Calu3 (cell line): ENCODE measurements at regions of chr15 and their contacts with region 1.

Region 1: GRCh38 chr15:100671858-100672543 is 69.6 kb downstream of the ASB7 start:
- DNase-seq: peak; percentile 78
- H3K4me3 Mint-ChIP-seq: peak overlapping the region; percentile 16
- H3K27ac Mint-ChIP-seq: peak overlapping the region; percentile 86
- H3K4me1 Mint-ChIP-seq: peaks cover 32% of the 10 kb centered on the region
- H3K27me3 Mint-ChIP-seq: no peaks in the 10 kb centered on the region
- CTCF ChIP-seq: peak; percentile 81

Region 2: DNA sequence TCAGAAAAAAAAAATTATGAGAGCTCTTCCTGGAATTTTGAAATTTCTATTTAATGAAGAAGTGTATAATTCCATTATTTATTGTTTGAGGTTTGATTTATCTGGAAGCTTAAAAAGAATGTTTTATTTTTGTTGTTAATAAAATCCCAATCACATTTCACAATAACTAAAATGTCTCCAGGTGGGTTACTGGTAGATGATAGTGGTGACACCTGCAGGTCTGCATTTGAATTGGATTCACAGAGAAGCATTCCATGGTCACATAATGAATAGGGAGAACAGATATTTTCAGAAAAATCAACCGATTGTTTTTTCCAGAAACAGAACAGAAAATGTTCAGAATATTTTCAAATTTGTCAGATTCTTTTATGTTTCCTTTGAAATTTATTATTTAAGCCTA is 21.3 kb before region 1 on chr15:
- CTCF ChIA-PET with region 1: no interaction called
- intact Hi-C with region 1: no loop called
- DNase-seq: peak; percentile 26
- H3K4me3 Mint-ChIP-seq: no peak overlapping the region
- H3K27ac Mint-ChIP-seq: no peak overlapping the region
- H3K4me1 Mint-ChIP-seq: no peaks in the 10 kb centered on the region
- H3K27me3 Mint-ChIP-seq: no peaks in the 10 kb centered on the region
- CTCF ChIP-seq: peak; percentile 24

Region 3: GRCh38 chr15:100849252-100850171 is 177.5 kb after region 1 on chr15:
- CTCF ChIA-PET with region 1: interaction called, 4 read pairs
- intact Hi-C with region 1: loop called (anchors 1 kb)
- DNase-seq: peak; percentile 93
- H3K4me3 Mint-ChIP-seq: peak overlapping the region; percentile 93
- H3K27ac Mint-ChIP-seq: peak overlapping the region; percentile 90
- H3K4me1 Mint-ChIP-seq: peaks cover 28% of the 10 kb centered on the region
- H3K27me3 Mint-ChIP-seq: no peaks in the 10 kb centered on the region
- CTCF ChIP-seq: peak; percentile 73